Gastrocnemius medialis (tissue), 4 donors: ENCODE measurements at regions of chr17 and their contacts with region 1.

Region 1: GRCh38 chr17:35731239-35731931 is at the start of gene RASL10B:
- DNase-seq: peak in 1 of 2 donors; percentile 46
- ATAC-seq: peak; percentile 46 to 74
- H3K4me3 ChIP-seq: peak within 1 kb of the TSS; percentile 53 to 78 (median 66)
- H3K27ac ChIP-seq: peak within 1 kb of the TSS; percentile 55 to 80 (median 74)
- H3K4me1 ChIP-seq: peaks cover 21 to 26% of the 10 kb centered on the region in 2 donors
- H3K27me3 ChIP-seq: no peaks in the 10 kb centered on the region
- CTCF ChIP-seq: no peak
- POLR2A ChIP-seq: no peak
- total RNA-seq, gene RASL10B: 4.7 to 13.8 (median 10.0) TPM

Region 2: GRCh38 chr17:35695613-35696012 is 35.8 kb before region 1 on chr17:
- in situ Hi-C with region 1: no loop called
- intact Hi-C with region 1: loop called (anchors 5 kb)
- DNase-seq: no peak
- ATAC-seq: no peak
- H3K4me3 ChIP-seq: no peak overlapping the region
- H3K27ac ChIP-seq: no peak overlapping the region
- H3K4me1 ChIP-seq: peaks cover 0 to 15% of the 10 kb centered on the region in 2 donors
- H3K27me3 ChIP-seq: no peaks in the 10 kb centered on the region
- CTCF ChIP-seq: no peak
- POLR2A ChIP-seq: no peak